ENCODE measurements at regions of chr3 and their contacts with region 1.

Region 1: GRCh38 chr3:48465531-48466378 is 19.2 kb downstream of the ATRIP start:
- DNase-seq: peak; percentile 51 to 87 (median 81)
- ATAC-seq: peak; percentile 93
- H3K4me3 ChIP-seq: peak overlapping the region; percentile 77 to 95
- H3K4me3 Mint-ChIP-seq: peak overlapping the region; percentile 87
- H3K27ac ChIP-seq: peak overlapping the region; percentile 90 to 98
- H3K27ac Mint-ChIP-seq: peak overlapping the region; percentile 97
- H3K4me1 ChIP-seq: peaks cover 53% of the 10 kb centered on the region
- H3K4me1 Mint-ChIP-seq: peaks cover 55% of the 10 kb centered on the region
- H3K27me3 ChIP-seq: no peaks in the 10 kb centered on the region
- H3K27me3 Mint-ChIP-seq: no peaks in the 10 kb centered on the region
- CTCF ChIP-seq: no peak

Region 2: DNA sequence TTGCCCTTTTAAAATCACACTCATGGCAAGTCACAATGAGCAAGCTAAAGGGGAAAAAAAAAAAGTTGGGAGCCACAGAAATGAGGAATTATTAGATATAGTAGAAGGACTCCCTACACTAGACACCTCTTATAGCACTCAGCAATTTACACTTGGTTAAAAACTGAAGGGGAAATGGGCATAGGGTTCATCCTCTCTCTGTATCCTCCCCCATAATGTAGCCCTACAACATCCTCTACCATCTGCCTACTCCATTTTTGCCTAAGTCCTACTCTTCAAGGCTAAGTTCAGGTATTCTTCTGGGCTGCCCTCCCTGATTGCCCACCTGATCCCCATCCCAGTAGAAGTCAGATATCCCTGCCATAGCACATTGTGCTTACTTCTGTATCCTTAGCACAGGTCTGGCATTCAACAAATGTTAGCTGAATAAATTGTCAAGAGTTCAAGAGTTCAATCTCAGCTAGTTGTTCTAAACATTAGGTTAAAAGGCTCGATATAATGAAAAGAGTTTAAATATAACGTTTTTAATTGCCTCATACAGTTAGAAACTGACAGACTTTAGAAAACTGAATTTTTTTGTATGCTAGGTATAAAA is 1316.3 kb before region 1 on chr3:
- CTCF ChIA-PET with region 1: no interaction called
- POLR2A ChIA-PET with region 1: no interaction called
- intact Hi-C with region 1: no loop called
- DNase-seq: no peak
- ATAC-seq: peak; percentile 17
- H3K4me3 ChIP-seq: no peak overlapping the region
- H3K4me3 Mint-ChIP-seq: peak overlapping the region; percentile 19
- H3K27ac ChIP-seq: no peak overlapping the region
- H3K27ac Mint-ChIP-seq: peak overlapping the region; percentile 75
- H3K4me1 ChIP-seq: peaks cover 35% of the 10 kb centered on the region
- H3K4me1 Mint-ChIP-seq: peaks cover 72% of the 10 kb centered on the region
- H3K27me3 ChIP-seq: no peaks in the 10 kb centered on the region
- H3K27me3 Mint-ChIP-seq: no peaks in the 10 kb centered on the region
- CTCF ChIP-seq: no peak

Region 3: GRCh38 chr3:47161983-47162694 is 1303.6 kb before region 1 on chr3:
- CTCF ChIA-PET with region 1: no interaction called
- POLR2A ChIA-PET with region 1: no interaction called
- intact Hi-C with region 1: no loop called
- DNase-seq: peak in 1 of 9 experiments; percentile 17
- ATAC-seq: no peak
- H3K4me3 ChIP-seq: peak overlapping the region; percentile 89 to 93
- H3K4me3 Mint-ChIP-seq: peak overlapping the region; percentile 99
- H3K27ac ChIP-seq: peak overlapping the region in 1 of 2 experiments; percentile 74
- H3K27ac Mint-ChIP-seq: peak overlapping the region; percentile 97
- H3K4me1 ChIP-seq: peaks cover 62% of the 10 kb centered on the region
- H3K4me1 Mint-ChIP-seq: peaks cover 66% of the 10 kb centered on the region
- H3K27me3 ChIP-seq: no peaks in the 10 kb centered on the region
- H3K27me3 Mint-ChIP-seq: no peaks in the 10 kb centered on the region
- CTCF ChIP-seq: no peak

Region 4: DNA sequence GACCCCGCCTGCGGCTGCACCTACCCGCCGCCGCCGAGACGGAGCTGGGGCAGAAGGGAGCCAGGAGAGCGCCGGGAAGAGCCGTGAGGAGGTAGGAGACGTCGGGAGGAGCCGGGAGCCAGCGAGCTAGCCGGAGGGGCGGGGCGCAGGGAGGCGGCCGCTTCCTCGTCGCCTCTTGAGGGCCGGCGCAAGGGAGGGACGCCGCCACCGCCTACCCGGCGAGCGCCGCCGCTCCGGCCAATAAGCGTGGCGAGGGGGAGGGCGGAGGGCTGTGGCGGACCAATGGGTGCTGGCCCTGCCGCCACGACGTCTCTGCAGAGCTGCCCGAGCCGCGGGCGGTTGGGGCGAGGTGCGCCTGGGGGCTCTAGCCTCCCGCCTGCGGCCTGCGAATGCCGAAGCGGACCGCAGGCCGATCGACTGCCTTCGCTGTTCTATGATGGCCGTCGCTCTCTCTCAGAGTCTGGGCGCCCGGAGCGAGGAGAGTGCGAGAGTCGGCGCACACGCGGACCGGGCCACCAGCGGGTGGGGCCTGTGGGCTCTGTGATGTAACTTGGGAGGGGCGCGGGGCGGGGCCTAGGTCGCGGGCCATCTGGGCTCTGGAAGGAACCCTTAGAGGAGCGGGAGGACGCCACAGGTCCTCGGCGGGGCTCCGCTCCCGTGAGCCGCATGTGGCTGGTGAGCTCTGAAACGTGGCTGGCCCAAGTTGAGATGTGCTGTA is 376.8 kb before region 1 on chr3:
- CTCF ChIA-PET with region 1: no interaction called
- POLR2A ChIA-PET with region 1: no interaction called
- intact Hi-C with region 1: no loop called
- DNase-seq: peak; percentile 89 to 97 (median 94)
- ATAC-seq: peak; percentile 91
- H3K4me3 ChIP-seq: peak overlapping the region; percentile 80 to 100
- H3K4me3 Mint-ChIP-seq: peak overlapping the region; percentile 96
- H3K27ac ChIP-seq: peak overlapping the region; percentile 86 to 95
- H3K27ac Mint-ChIP-seq: peak overlapping the region; percentile 98
- H3K4me1 ChIP-seq: peaks cover 18% of the 10 kb centered on the region
- H3K4me1 Mint-ChIP-seq: peaks cover 33% of the 10 kb centered on the region
- H3K27me3 ChIP-seq: no peaks in the 10 kb centered on the region
- H3K27me3 Mint-ChIP-seq: no peaks in the 10 kb centered on the region
- CTCF ChIP-seq: no peak

Region 5: DNA sequence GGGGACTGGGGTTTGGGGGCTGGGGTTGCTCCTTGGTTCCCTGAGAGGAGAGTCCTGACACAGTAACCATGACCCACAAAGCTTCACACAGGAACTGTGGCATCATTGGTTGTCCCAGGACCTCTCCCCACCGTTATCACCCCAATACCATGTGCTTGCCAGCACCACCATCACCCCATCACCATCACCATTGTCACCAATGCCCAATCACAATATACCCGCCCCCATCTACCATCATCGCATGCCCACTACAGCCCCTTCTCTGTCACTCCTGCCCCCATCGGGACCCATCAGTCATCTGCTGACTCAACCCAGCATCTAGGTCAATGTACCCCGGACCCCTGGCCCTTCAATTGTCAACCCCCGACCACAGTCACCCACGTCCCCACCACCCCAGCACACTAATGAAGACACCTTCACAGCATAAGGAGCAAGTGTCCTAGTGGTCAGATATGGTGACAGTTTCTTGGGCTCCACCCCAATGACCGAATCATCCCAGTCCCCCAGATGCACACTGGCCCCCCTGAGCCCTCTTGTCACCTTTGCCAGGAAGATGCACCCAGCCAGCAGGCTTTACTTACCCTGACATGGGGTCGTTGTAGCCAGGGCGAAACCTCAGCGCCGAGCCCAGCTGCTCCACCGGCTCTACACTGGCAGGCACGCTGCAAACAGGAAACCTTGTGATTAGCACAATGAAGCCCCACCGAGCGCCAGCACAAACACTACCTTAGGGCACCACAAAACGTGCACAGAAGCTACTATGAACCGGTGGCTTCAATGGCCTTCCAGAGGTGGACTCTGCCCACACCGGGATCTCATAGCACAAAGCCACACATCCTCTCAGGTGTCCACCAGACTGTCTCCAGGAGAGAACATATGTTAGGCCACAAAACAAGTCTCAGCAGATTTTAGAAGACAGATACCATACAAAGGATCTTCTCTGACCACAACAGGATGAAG is 13.1 kb after region 1 on chr3:
- CTCF ChIA-PET with region 1: interaction called, 3 read pairs
- POLR2A ChIA-PET with region 1: interaction called, 6 read pairs
- intact Hi-C with region 1: loop called (anchors 1 kb)
- DNase-seq: peak in 8 of 9 experiments; percentile 56 to 87 (median 74)
- ATAC-seq: peak; percentile 80
- H3K4me3 ChIP-seq: peak overlapping the region; percentile 52 to 55
- H3K4me3 Mint-ChIP-seq: peak overlapping the region; percentile 81
- H3K27ac ChIP-seq: peak overlapping the region; percentile 58 to 84
- H3K27ac Mint-ChIP-seq: peak overlapping the region; percentile 99
- H3K4me1 ChIP-seq: peaks cover 26% of the 10 kb centered on the region
- H3K4me1 Mint-ChIP-seq: peaks cover 37% of the 10 kb centered on the region
- H3K27me3 ChIP-seq: no peaks in the 10 kb centered on the region
- H3K27me3 Mint-ChIP-seq: no peaks in the 10 kb centered on the region
- CTCF ChIP-seq: no peak